HEK293 (cell line): ENCODE measurements at regions of chr12 and their contacts with region 1.

Region 1: DNA sequence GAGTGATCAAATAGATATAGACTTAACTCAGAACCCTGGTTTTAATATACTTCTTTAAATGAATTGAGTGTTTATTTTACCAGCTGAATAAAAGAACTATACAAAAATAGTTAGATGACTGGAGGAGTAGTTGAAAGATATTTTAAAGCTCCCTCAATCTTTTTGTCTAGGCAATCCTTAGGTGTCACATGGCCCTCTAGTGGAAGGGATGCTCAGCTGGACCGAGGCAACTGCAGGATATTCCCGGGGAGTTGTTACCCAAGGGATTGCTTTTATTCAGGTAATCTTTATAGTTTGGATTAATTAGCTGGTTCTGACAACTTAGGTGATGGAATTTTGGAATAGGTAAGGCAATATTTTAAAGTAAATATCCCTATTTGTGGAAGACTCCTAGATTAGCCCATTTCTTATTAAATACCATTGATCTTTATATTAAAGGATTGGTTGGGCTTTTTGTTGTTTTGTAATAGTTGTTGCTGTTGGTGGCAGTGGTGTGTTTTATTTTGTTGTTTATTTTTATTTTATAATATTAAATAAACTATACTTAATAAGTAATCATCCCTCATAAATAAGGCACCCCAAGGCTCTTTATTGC is 57.1 kb downstream of the ZDHHC17 start:
- H3K4me3 ChIP-seq: no peak overlapping the region
- H3K27ac ChIP-seq: no peak overlapping the region
- H3K4me1 ChIP-seq: no peaks in the 10 kb centered on the region
- CTCF ChIP-seq: no peak

Region 2: GRCh38 chr12:76621582-76622024 is 199.4 kb before region 1 on chr12:
- CTCF ChIA-PET with region 1: interaction called, 23 read pairs
- POLR2A ChIA-PET with region 1: no interaction called
- H3K4me3 ChIP-seq: no peak overlapping the region
- H3K27ac ChIP-seq: no peak overlapping the region
- H3K4me1 ChIP-seq: no peaks in the 10 kb centered on the region
- CTCF ChIP-seq: peak; percentile 80

Region 3: DNA sequence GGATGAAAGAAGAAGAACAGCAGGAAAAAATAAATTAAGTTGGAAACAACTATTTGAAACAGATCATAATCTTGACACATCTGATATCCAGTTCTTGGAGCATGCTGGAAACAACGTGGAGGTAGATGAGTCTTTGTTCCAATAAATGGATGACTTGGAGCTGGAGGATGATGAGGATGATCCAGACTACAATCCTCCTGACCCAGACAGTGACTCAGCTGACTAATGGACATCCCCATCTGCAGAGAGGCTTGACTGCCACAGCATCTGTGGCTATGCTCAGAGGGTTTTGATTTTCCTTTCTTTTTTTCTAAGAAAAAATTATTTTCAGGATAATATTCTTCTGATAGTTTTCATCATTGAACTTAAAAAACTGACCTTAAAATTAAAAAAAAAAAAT is 63.3 kb before region 1 on chr12:
- CTCF ChIA-PET with region 1: no interaction called
- POLR2A ChIA-PET with region 1: no interaction called
- H3K4me3 ChIP-seq: no peak overlapping the region
- H3K27ac ChIP-seq: no peak overlapping the region
- H3K4me1 ChIP-seq: no peaks in the 10 kb centered on the region
- CTCF ChIP-seq: no peak

Region 4: GRCh38 chr12:76810671-76811419 is 10.1 kb before region 1 on chr12:
- CTCF ChIA-PET with region 1: interaction called, 14 read pairs
- POLR2A ChIA-PET with region 1: interaction called, 3 read pairs
- H3K4me3 ChIP-seq: no peak overlapping the region
- H3K27ac ChIP-seq: no peak overlapping the region
- H3K4me1 ChIP-seq: no peaks in the 10 kb centered on the region
- CTCF ChIP-seq: no peak